BJ (cell line): ENCODE measurements at regions of chr5 and their contacts with region 1.

Region 1: GRCh38 chr5:52989781-52990527 is 802 bp downstream of the ITGA2 start:
- DNase-seq: no peak
- H3K4me3 ChIP-seq: peak overlapping the region; percentile 67
- H3K27me3 ChIP-seq: no peaks in the 10 kb centered on the region
- CTCF ChIP-seq: peak; percentile 48

Region 2: DNA sequence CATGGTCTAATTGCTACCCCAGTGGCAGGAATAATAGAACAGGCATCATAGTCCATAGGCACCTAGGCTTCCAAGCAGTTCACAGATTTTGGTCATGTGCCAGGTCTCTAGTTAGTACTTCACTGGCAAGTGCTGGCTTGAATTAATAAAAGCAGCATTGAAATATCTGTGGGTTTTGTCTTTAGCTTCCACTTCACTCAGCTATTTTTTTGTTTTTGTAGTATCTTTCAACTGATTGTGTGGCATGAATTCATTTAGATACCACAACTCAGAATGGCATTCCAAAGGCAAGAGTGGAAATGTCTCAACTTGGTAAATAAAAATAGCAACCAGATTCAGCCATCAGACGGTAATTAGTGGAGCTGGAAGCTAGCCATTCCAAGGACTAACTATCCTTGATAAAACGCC is 28.7 kb before region 1 on chr5:
- CTCF ChIA-PET with region 1: no interaction called
- POLR2A ChIA-PET with region 1: interaction called, 13 read pairs
- DNase-seq: peak; percentile 30
- H3K4me3 ChIP-seq: no peak overlapping the region
- H3K27me3 ChIP-seq: no peaks in the 10 kb centered on the region
- CTCF ChIP-seq: no peak

Region 3: GRCh38 chr5:53430261-53431252 is 440.6 kb after region 1 on chr5:
- CTCF ChIA-PET with region 1: no interaction called
- POLR2A ChIA-PET with region 1: no interaction called
- DNase-seq: no peak
- H3K4me3 ChIP-seq: no peak overlapping the region
- H3K27me3 ChIP-seq: no peaks in the 10 kb centered on the region
- CTCF ChIP-seq: peak; percentile 56